IMR-90 (cell line): ENCODE measurements at regions of chr21 and their contacts with region 1.

Region 1: DNA sequence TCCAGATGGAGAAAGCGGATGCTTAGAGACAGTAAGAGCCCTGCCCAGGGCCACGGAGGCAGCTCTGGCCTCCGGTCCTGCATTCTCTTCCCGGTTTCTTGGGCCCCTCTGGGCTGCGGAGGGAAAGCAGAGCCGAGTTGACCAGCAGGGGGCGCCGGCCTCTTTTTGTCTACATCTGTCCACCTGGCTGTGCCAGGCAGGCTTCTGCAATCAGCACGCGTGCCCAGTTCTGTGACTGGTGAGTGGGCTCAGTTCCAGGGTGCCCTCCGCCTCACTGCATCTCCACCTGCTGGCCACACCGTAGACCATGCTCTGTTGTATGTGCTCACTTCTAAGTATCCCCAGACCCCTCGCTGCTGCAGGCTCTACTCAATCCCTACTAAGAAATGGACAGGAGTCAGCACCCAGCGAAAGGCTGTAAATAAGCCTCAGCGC is 6.7 kb upstream of the HUNK start:
- DNase-seq: peak; percentile 62
- ATAC-seq: peak; percentile 98
- H3K4me3 ChIP-seq: no peak overlapping the region
- H3K27ac ChIP-seq: no peak overlapping the region
- H3K4me1 ChIP-seq: no peaks in the 10 kb centered on the region
- H3K27me3 ChIP-seq: peaks cover 18% of the 10 kb centered on the region
- CTCF ChIP-seq: peak; percentile 84
- POLR2A ChIP-seq: no peak
- RAD21 ChIP-seq: peak; percentile 81

Region 2: GRCh38 chr21:31786164-31786920 is 79.8 kb before region 1 on chr21:
- CTCF ChIA-PET with region 1: interaction called, 3 read pairs
- POLR2A ChIA-PET with region 1: no interaction called
- dilution Hi-C with region 1: no loop called
- in situ Hi-C with region 1: no loop called
- intact Hi-C with region 1: loop called (anchors 2 kb)
- DNase-seq: no peak
- ATAC-seq: no peak
- H3K4me3 ChIP-seq: no peak overlapping the region
- H3K27ac ChIP-seq: no peak overlapping the region
- H3K4me1 ChIP-seq: no peaks in the 10 kb centered on the region
- H3K27me3 ChIP-seq: peaks cover 3% of the 10 kb centered on the region; the same call in 1 of the 2 replicates
- CTCF ChIP-seq: no peak
- POLR2A ChIP-seq: no peak
- RAD21 ChIP-seq: no peak

Region 3: GRCh38 chr21:31837618-31838390 is 28.3 kb before region 1 on chr21:
- CTCF ChIA-PET with region 1: interaction called, 3 read pairs
- POLR2A ChIA-PET with region 1: interaction called, 15 read pairs
- dilution Hi-C with region 1: no loop called
- in situ Hi-C with region 1: no loop called
- intact Hi-C with region 1: no loop called
- DNase-seq: no peak
- ATAC-seq: no peak
- H3K4me3 ChIP-seq: no peak overlapping the region
- H3K27ac ChIP-seq: no peak overlapping the region
- H3K4me1 ChIP-seq: no peaks in the 10 kb centered on the region
- H3K27me3 ChIP-seq: no peaks in the 10 kb centered on the region; the same call in 1 of the 2 replicates
- CTCF ChIP-seq: no peak
- POLR2A ChIP-seq: no peak
- RAD21 ChIP-seq: no peak

Region 4: DNA sequence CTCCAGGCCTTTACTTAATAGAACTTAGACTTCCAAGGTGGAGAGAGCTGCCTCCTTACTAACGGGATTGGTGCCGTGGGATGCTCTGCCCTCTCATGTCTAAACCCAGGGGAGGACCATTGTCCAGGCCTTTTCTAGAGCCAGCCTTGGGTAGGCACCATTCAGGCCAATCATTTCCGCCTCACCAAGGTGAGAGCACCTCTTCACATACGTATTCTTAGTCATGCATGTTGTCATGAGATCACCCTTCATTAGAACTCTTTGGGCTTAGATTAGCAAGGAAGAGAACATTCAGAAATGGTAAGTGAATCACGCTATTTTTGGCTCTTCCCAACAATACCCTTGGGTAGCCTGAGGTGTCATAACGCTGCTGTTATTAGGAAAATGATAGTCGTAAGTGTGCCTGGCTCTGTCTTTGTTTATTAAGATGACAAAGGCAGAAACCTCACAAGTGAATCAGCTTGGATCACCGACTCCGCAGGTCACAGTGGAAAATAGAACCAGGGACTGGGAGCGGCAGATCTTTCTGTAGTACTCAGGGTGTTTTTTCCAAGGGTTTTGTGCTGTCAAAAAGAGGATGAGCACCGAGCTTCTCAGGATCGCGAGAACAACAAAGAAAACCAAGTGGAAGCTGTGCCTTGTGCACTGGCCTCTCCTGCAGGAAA is 61.7 kb after region 1 on chr21:
- CTCF ChIA-PET with region 1: no interaction called
- POLR2A ChIA-PET with region 1: no interaction called
- dilution Hi-C with region 1: no loop called
- in situ Hi-C with region 1: no loop called
- intact Hi-C with region 1: no loop called
- DNase-seq: peak; percentile 25
- ATAC-seq: no peak
- H3K4me3 ChIP-seq: no peak overlapping the region
- H3K27ac ChIP-seq: no peak overlapping the region
- H3K4me1 ChIP-seq: peaks cover 8% of the 10 kb centered on the region
- H3K27me3 ChIP-seq: no peaks in the 10 kb centered on the region
- CTCF ChIP-seq: no peak
- POLR2A ChIP-seq: no peak
- RAD21 ChIP-seq: no peak

Region 5: DNA sequence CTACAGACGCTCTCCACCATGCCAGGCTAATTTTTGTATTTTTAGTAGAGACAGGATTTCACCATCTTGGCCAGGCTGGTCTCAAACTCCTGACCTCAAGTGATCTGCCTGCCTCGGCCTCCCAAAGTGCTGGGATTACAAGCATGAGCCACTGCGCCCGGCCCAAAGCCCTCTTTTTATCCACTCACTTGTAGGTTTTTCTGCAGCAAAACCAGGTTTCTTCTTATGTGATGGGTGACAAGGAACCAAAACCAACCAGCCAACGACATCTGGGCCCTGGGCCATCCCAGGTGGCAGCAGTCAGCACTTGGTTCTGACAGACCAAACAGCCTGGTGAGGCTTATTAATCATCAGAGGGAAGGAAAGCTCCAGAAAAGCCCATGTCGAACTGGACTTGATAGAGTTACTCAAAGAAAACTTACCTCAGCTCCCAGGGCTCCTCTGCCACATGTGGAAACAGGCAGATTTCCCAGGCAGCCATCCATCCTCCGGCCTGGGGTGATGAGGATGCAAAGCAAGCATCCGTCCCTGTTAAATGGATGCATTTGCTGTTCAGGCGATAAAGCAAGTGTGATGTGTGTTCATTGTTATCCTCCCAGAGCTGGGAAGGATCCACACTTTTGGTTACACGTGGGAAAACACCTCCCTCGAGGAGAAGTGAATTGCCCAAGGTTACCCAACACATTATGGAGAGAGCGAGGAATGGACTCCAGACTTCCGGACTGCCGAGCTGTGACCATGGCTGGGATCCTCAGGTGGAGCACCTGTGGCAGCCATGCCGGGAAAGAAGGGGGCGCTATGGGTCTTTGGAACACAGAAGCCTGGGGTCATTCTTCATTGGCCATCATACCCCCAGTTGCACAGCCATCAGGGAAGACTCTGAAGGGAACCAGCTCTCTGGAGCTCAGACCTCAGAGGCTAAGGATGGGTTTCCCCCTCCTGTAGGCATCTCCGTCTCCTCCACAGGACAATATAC is 125.5 kb after region 1 on chr21:
- CTCF ChIA-PET with region 1: no interaction called
- POLR2A ChIA-PET with region 1: no interaction called
- dilution Hi-C with region 1: no loop called
- in situ Hi-C with region 1: no loop called
- intact Hi-C with region 1: loop called (anchors 2 kb)
- DNase-seq: no peak
- ATAC-seq: no peak
- H3K4me3 ChIP-seq: no peak overlapping the region
- H3K27ac ChIP-seq: no peak overlapping the region
- H3K4me1 ChIP-seq: no peaks in the 10 kb centered on the region; the same call in 1 of the 2 replicates
- H3K27me3 ChIP-seq: no peaks in the 10 kb centered on the region
- CTCF ChIP-seq: no peak
- POLR2A ChIP-seq: no peak
- RAD21 ChIP-seq: no peak

Region 6: DNA sequence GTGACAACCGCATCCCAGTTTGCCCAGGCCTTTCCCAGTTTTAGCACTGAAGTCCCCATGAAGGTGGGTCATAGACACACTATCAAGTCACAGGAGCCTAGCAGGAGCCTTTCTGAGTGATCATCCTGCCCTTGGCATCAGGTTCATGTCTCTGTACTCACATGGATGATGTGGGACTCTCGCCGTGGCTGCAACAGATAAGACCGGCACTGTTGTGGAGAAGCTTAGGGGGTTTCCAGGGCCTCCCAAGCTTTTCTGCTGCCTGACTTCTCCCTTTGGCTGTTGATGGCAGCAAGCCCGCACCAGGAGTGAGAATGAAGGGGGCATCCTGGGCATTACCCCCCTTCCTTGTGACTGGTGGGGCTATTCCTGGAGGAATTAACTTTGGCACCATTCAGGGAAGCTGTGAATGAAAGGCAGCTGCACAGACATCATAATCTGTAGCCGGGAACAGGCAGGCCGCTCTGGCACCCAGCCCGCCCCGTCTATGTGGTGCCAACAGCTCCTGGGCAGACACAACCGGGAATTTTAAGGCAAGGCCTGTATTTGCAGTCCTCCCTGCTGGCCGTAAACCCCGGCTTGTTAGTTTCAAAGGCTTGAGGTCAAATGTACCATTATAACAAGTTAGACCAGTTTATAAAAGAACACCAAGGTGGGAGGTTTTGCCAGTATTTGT is 155.4 kb after region 1 on chr21:
- CTCF ChIA-PET with region 1: no interaction called
- POLR2A ChIA-PET with region 1: no interaction called
- dilution Hi-C with region 1: no loop called
- in situ Hi-C with region 1: no loop called
- intact Hi-C with region 1: no loop called
- DNase-seq: no peak
- ATAC-seq: no peak
- H3K4me3 ChIP-seq: no peak overlapping the region
- H3K27ac ChIP-seq: no peak overlapping the region
- H3K4me1 ChIP-seq: no peaks in the 10 kb centered on the region
- H3K27me3 ChIP-seq: peaks cover 14% of the 10 kb centered on the region
- CTCF ChIP-seq: no peak
- POLR2A ChIP-seq: no peak
- RAD21 ChIP-seq: no peak

Region 7: GRCh38 chr21:32096411-32096810 is 230.3 kb after region 1 on chr21:
- CTCF ChIA-PET with region 1: no interaction called
- POLR2A ChIA-PET with region 1: no interaction called
- dilution Hi-C with region 1: no loop called
- in situ Hi-C with region 1: no loop called
- intact Hi-C with region 1: loop called (anchors 5 kb)
- DNase-seq: no peak
- ATAC-seq: no peak
- H3K4me3 ChIP-seq: no peak overlapping the region
- H3K27ac ChIP-seq: no peak overlapping the region
- H3K4me1 ChIP-seq: no peaks in the 10 kb centered on the region
- H3K27me3 ChIP-seq: peaks cover 5% of the 10 kb centered on the region
- CTCF ChIP-seq: peak; percentile 26; the same call in 1 of the 2 replicates
- POLR2A ChIP-seq: no peak
- RAD21 ChIP-seq: no peak

Region 8: DNA sequence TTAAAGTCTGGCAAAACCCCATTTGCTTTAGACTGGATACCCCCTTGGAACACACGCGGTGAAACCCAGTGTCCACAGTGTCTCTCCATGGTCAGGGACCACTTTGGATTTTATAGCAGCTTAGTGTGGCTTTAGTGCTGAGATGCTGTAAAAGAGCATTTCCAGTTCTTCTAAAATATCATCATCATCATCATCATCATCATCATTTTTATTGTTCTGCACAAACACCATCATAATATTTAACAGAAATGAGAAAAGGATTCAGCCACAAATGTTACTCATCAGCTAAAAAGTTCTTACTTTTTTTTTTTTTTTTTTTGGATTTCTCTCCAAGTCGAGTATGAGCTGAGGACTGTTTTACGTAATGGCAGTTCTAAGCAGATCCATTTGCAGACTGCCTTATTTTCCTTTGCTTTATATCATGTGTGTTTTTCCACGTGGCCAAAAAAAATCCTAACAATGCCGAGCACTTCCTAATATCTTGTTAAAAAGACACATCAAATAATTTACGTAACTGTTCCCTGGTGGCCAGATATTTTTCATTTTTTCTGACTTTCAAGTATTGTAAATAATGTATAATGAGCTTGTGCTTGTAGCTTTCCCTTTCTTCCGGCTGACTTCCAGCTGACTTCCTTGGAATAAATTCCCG is 609.2 kb after region 1 on chr21:
- CTCF ChIA-PET with region 1: no interaction called
- POLR2A ChIA-PET with region 1: no interaction called
- dilution Hi-C with region 1: no loop called
- in situ Hi-C with region 1: no loop called
- intact Hi-C with region 1: no loop called
- DNase-seq: peak; percentile 66
- ATAC-seq: peak; percentile 85
- H3K4me3 ChIP-seq: no peak overlapping the region
- H3K27ac ChIP-seq: no peak overlapping the region
- H3K4me1 ChIP-seq: peaks cover 5% of the 10 kb centered on the region
- H3K27me3 ChIP-seq: no peaks in the 10 kb centered on the region
- CTCF ChIP-seq: no peak
- POLR2A ChIP-seq: no peak
- RAD21 ChIP-seq: no peak